ENCODE measurements at regions of chr6 and their contacts with region 1.

Region 1: DNA sequence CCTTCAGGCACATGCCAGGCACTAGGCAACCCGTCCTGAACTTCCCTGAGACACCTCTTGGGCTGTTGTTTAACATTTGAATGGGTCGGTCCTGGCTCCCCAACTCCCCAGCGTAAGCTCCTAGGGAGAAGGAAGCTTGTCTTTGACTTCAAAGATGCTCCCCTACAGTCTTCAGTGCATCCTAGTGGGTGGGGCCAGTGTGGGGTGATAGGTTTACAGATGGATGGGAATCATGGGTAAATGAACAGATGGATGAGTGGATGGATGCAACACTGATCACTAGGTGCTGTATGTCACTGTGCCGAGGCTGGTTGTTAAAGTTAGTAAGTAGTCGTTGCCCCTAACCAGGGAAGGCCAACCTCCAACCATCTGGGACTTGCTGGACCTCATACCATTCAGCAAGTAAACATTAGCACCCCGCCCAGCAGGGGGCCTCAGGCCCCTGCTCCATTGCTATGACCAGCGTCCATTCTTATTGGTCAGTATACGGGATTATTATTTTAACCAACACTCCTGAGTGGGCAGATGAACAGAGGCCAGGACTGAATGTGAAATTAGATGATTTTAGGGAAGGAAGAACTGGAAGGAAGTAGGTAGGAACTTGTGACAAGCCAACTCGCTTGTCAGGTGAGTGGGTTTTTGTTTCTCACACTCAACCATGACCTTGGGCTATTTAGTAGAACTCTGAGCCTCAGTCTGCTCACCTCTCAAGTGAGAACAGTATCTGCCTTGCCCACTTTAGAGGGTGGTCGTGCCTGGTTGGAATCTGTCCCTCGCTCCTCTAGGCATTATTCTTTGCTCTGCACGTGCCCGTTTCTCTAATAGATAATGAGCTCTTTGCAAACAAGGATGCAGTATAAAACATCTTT is 82.9 kb upstream of the FOXP4 start:
- DNase-seq: no peak
- H3K4me3 ChIP-seq: no peak overlapping the region
- H3K27ac ChIP-seq: no peak overlapping the region
- H3K4me1 ChIP-seq: peaks cover 0 to 13% (median 1%) of the 10 kb centered on the region in 6 donors
- H3K27me3 ChIP-seq: peaks cover 0 to 54% (median 7%) of the 10 kb centered on the region in 7 donors
- CTCF ChIP-seq: peak; percentile 34 to 70 (median 62)
- POLR2A ChIP-seq: no peak

Region 2: DNA sequence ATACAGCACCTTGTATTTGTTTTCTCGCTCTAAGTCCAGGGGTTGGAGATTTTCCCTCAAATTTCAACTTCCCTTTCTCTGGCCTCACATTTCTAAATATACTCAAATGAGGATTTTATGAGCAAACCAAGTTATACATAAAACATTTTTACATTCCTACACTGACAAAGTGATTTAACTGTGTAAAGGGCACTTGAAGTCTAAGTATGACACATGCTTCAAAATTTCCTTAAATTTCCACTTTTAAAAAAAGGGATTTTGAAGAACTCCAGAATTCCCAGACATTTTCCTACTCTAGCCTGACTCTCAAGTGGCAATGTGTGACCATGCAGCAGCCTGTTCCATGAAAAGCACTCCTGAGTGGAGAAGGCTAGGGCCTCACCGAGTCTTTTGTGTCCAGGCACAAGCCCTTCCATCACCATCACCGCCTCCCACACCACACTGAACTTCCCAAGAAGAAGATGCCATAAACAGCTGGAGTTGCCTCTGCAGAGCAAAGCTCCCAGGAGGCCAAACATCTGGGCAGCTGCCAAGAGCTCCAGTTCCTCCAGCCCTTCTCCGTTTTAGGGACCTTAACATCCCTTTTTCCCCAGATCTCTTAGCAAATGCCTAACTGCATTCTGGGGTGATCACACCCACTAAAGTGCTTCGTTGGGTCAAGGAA is 59.0 kb before region 1 on chr6:
- intact Hi-C with region 1: no loop called
- DNase-seq: no peak
- H3K4me3 ChIP-seq: no peak overlapping the region
- H3K27ac ChIP-seq: no peak overlapping the region
- H3K4me1 ChIP-seq: peaks cover 0 to 8% (median 4%) of the 10 kb centered on the region in 6 donors
- H3K27me3 ChIP-seq: peaks cover 0 to 69% (median 10%) of the 10 kb centered on the region in 7 donors
- CTCF ChIP-seq: no peak
- POLR2A ChIP-seq: no peak

Region 3: DNA sequence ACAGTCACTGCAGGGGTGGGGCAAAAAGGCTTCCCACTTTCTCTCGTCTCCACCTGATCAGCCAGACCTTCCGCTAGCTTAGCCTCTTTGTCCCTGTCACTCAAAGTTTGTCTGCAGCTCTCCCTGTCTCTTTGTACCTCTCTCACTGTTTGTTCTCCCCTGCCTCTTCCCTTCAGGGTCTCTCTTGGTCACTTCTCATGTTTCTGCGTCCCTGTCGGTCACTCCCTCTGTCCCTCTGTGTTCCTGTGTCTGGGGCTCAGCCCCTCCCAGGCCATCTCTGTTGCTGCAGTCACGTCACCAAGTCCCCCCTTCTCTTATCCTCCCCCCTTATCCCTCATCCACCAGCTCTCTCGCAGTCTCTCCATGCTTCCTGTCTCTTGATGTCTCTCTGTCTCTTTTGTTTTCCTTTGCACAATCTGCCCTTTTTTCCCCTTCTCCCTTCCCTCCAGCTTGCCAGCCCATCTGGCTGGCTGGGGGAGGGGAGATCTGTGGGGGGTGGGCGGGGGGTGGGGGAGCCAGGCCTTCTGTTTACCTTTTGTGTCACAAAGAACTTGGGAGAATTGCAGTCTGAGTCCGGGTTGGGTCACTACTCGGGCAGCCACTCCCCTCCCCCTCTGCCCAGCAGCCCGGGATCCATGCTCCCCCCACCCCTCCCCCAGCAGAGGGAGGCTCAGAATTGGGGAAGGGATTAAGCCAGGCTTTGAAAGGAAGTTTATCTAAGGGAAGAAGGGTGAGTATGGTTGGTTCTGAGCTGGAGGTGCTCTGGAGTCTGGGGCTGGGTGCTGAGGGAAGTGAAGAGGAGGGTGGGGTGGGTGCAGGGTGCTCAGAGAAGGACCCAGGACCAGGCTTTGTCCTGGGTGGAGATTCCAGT is 115.2 kb after region 1 on chr6:
- intact Hi-C with region 1: loop called (anchors 5 kb)
- DNase-seq: no peak
- H3K4me3 ChIP-seq: no peak overlapping the region
- H3K27ac ChIP-seq: no peak overlapping the region
- H3K4me1 ChIP-seq: peaks cover 0 to 19% (median 4%) of the 10 kb centered on the region in 6 donors
- H3K27me3 ChIP-seq: no peaks in the 10 kb centered on the region
- CTCF ChIP-seq: no peak
- POLR2A ChIP-seq: no peak

Measured in spleen (tissue), 13 donors.